B cell (primary cell): ENCODE measurements at regions of chr15 and their contacts with region 1.

Region 1: DNA sequence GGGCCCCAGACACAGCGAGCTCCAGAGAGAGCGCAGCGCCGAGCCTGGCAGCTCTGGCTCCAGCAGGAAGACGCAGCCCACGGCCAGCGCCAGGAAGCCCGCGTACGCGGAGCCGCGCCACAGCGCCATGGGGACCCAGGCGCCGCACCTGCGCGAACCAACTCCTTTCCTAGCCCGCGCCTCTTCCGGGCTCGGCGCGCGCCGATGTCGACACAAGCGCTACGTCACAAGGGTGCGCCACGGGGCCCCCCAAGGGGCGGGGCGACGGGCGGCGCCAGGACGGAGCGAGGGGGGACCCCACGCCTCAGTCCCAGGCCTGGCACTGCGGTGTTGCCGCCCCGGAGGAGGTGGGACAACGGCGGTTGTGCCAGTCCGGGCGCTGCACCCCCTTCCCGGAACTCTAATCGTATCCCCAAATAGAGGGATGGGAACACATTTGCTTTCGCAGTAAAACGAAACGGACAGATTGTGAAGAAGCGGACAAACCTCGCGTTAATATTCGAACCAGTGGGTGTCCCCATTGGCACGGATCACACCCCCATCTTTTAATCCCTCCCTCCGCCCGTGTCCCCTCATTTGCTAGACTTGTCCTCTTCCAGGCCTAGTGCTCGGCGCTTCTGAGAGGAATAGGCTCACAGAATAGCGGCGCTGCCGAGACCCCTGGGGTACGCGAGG is at the start of gene ADPGK:
- DNase-seq: peak; percentile 98
- ATAC-seq: peak; percentile 84
- H3K4me3 ChIP-seq: peak within 1 kb of the TSS; percentile 65 to 97 (median 95)
- H3K4me3 Mint-ChIP-seq: peak within 1 kb of the TSS; percentile 92
- H3K27ac ChIP-seq: peak within 1 kb of the TSS; percentile 97 to 98
- H3K27ac Mint-ChIP-seq: peak within 1 kb of the TSS; percentile 97
- H3K4me1 ChIP-seq: peaks cover 28 to 32% of the 10 kb centered on the region in 2 donors
- H3K4me1 Mint-ChIP-seq: peaks cover 41% of the 10 kb centered on the region
- H3K27me3 ChIP-seq: no peaks in the 10 kb centered on the region
- H3K27me3 Mint-ChIP-seq: no peaks in the 10 kb centered on the region
- CTCF ChIP-seq: no peak
- total RNA-seq, gene ADPGK: 128 and 135 TPM in 2 replicates

Region 2: DNA sequence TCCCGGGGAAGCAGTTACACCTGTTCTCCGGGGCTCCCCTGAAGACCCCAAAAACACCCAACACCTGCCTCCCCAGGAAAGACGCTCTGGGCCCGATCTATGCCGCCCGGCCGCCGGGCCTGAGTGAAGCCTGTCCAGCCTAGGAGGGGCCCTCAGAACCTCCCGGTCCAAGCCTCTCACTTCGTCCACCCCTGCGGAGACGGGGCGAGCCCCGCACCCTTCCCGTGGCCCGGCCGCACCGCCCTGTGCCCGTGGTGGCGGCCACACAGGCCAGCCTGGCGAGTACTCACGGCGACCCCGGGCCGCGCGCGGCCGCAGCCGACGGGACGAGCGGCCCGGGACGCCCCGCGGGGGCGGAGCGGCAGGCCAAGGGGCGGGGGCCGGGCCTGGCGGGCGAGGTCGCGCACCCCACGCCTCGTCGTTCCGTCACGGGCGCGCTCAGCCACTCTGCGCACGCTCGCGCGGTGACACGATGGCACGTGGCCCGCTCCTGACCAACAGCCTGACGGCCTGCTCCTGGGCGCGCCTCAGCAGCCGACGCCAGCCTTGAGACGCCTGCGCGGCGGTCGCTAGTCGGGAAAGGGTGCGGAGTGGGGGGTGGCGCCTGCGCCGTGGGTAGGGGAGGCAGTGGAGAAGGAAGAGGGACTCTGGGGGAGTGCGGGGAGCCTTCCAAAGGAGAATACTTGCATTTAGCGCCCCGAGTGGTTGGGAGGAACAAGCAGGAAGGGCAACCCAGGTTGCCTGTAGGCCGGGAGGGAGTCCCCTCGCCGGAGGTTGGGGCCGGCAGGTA is 511.3 kb before region 1 on chr15 and contains the start of gene PARP6:
- CTCF ChIA-PET with region 1: no interaction called
- POLR2A ChIA-PET with region 1: no interaction called
- intact Hi-C with region 1: loop called (anchors 2 kb)
- DNase-seq: peak; percentile 98
- ATAC-seq: peak; percentile 94
- H3K4me3 ChIP-seq: peak within 1 kb of the TSS; percentile 53 to 88 (median 82)
- H3K4me3 Mint-ChIP-seq: peak within 1 kb of the TSS; percentile 89
- H3K27ac ChIP-seq: peak within 1 kb of the TSS; percentile 71 to 80
- H3K27ac Mint-ChIP-seq: peak within 1 kb of the TSS; percentile 96
- H3K4me1 ChIP-seq: peaks cover 16 to 23% of the 10 kb centered on the region in 2 donors
- H3K4me1 Mint-ChIP-seq: peaks cover 38% of the 10 kb centered on the region
- H3K27me3 ChIP-seq: no peaks in the 10 kb centered on the region
- H3K27me3 Mint-ChIP-seq: no peaks in the 10 kb centered on the region
- CTCF ChIP-seq: peak; percentile 57
- total RNA-seq, gene PARP6: 118 and 130 TPM in 2 replicates

Region 3: GRCh38 chr15:72685925-72686794 is 97.5 kb before region 1 on chr15 and contains the starts of genes BBS4 and HIGD2B:
- CTCF ChIA-PET with region 1: no interaction called
- POLR2A ChIA-PET with region 1: no interaction called
- intact Hi-C with region 1: loop called (anchors 1 kb)
- DNase-seq: peak; percentile 91
- ATAC-seq: peak; percentile 94
- H3K4me3 ChIP-seq: peak within 1 kb of the TSS; percentile 70 to 98 (median 88)
- H3K4me3 Mint-ChIP-seq: peak within 1 kb of the TSS; percentile 97
- H3K27ac ChIP-seq: peak within 1 kb of the TSS; percentile 77 to 91
- H3K27ac Mint-ChIP-seq: peak within 1 kb of the TSS; percentile 94
- H3K4me1 ChIP-seq: peaks cover 11 to 12% of the 10 kb centered on the region in 2 donors
- H3K4me1 Mint-ChIP-seq: peaks cover 25% of the 10 kb centered on the region
- H3K27me3 ChIP-seq: no peaks in the 10 kb centered on the region
- H3K27me3 Mint-ChIP-seq: no peaks in the 10 kb centered on the region
- CTCF ChIP-seq: no peak
- total RNA-seq, gene BBS4: 25.7 and 34.9 TPM in 2 replicates
- total RNA-seq, gene HIGD2B: 0.52 and 1.4 TPM in 2 replicates

Region 4: DNA sequence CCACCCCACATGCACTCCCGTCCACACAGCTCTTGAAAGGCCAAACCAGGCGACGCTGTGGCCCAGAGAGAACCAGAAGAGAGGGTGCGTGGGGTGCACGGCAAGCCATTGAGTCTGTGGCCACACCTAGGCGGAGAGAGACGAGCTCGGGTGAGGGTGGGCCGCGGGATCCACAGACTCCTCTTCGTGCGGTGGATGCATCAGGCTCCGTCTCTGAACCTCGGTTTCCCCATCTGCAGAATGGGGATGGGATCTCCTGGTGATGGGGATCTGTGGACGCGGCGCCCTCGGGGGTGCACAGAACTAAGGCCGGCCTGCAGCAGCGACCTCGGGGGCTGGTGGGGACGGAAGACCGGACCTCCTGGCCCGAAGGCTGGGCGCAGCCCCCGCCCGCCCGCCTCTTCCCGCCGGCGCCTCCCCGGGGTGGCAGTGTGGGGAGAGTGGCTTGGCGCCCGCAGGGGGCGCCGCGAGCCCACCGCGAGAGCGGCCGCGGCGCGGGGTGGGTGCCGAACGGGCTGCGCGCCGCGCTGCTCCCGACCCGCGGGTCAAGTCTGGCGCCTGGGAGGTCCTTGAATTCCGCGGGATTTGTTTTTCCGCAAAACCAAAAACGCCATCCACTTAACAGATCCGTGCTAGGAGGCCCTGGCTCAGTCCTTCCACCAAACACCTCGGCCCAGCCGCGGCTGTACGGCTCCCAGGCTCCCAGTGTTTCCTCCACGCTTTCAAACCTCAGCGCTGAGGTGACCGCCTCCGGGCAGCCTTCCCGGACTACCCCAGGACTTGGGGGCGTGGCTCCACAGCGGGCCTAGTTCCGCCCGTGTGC is 13.0 kb after region 1 on chr15:
- CTCF ChIA-PET with region 1: no interaction called
- POLR2A ChIA-PET with region 1: no interaction called
- intact Hi-C with region 1: loop called (anchors 2 kb)
- DNase-seq: peak; percentile 62
- ATAC-seq: peak; percentile 79
- H3K4me3 ChIP-seq: peak overlapping the region; percentile 44 to 58 (median 54)
- H3K4me3 Mint-ChIP-seq: peak overlapping the region; percentile 88
- H3K27ac ChIP-seq: no peak overlapping the region
- H3K27ac Mint-ChIP-seq: peak overlapping the region; percentile 56
- H3K4me1 ChIP-seq: peaks cover 9 to 11% of the 10 kb centered on the region in 2 donors
- H3K4me1 Mint-ChIP-seq: peaks cover 12% of the 10 kb centered on the region
- H3K27me3 ChIP-seq: peaks cover 0 to 26% (median 18%) of the 10 kb centered on the region in 4 experiments
- H3K27me3 Mint-ChIP-seq: peaks cover 51% of the 10 kb centered on the region
- CTCF ChIP-seq: peak; percentile 64

Region 5: GRCh38 chr15:73265536-73266153 is 481.9 kb after region 1 on chr15:
- CTCF ChIA-PET with region 1: no interaction called
- POLR2A ChIA-PET with region 1: no interaction called
- intact Hi-C with region 1: loop called (anchors 1 kb)
- DNase-seq: peak; percentile 48
- ATAC-seq: peak; percentile 43
- H3K4me3 ChIP-seq: no peak overlapping the region
- H3K4me3 Mint-ChIP-seq: no peak overlapping the region
- H3K27ac ChIP-seq: no peak overlapping the region
- H3K27ac Mint-ChIP-seq: no peak overlapping the region
- H3K4me1 ChIP-seq: no peaks in the 10 kb centered on the region
- H3K4me1 Mint-ChIP-seq: no peaks in the 10 kb centered on the region
- H3K27me3 ChIP-seq: no peaks in the 10 kb centered on the region
- H3K27me3 Mint-ChIP-seq: peaks cover 9% of the 10 kb centered on the region
- CTCF ChIP-seq: peak; percentile 82